Pancreas (tissue), 10 donors: ENCODE measurements at regions of chr16 and their contacts with region 1.

Region 1: GRCh38 chr16:89395141-89395874 is 95.1 kb downstream of the ANKRD11 start:
- DNase-seq: peak; percentile 78 to 95 (median 92)
- ATAC-seq: peak; percentile 91 to 95 (median 94)
- H3K4me3 ChIP-seq: no peak overlapping the region
- H3K27ac ChIP-seq: peak overlapping the region in 3 of 4 donors; percentile 23 to 38 (median 32)
- H3K4me1 ChIP-seq: peaks cover 22 to 31% (median 30%) of the 10 kb centered on the region in 3 donors
- H3K27me3 ChIP-seq: no peaks in the 10 kb centered on the region
- CTCF ChIP-seq: no peak

Region 2: GRCh38 chr16:89343501-89344457 is 51.5 kb before region 1 on chr16:
- intact Hi-C with region 1: loop called in 1 of 3 experiments (anchors 10 kb)
- DNase-seq: no peak
- ATAC-seq: peak in 2 of 4 donors; percentile 24 to 49
- H3K4me3 ChIP-seq: no peak overlapping the region
- H3K27ac ChIP-seq: peak overlapping the region in 3 of 4 donors; percentile 61 to 74 (median 64)
- H3K4me1 ChIP-seq: peaks cover 12 to 32% (median 29%) of the 10 kb centered on the region in 3 donors
- H3K27me3 ChIP-seq: no peaks in the 10 kb centered on the region
- CTCF ChIP-seq: no peak